Posterior vena cava (tissue), 2 donors: ENCODE measurements at regions of chr4 and their contacts with region 1.

Region 1: GRCh38 chr4:82268050-82268825 is 105.6 kb downstream of the HNRNPD start:
- DNase-seq: no peak

Region 2: DNA sequence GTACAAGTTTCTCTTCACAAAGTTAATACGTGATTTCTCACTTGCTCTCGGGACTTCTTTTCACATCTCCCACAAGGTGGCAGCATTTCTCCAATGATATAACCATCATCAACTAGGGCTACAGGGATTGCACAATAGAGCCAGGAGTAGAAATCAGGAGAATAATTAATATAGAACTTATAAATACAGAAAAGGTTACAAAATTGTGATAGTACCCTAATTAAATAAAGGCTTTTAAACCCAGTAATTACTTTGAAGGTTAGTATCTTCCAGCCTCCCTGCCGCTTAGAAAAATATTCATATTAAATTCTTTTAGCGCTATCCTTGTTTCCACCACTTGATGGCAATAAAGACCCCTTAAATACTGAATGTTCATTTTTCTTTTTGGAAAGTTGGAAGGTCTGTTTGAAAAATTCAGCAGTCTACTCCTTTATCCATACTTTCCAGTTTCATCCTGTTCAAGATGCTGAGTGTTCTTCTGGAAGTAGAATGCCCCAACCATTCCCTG is 862.3 kb before region 1 on chr4:
- intact Hi-C with region 1: loop called in 1 of 2 experiments (anchors 10 kb)
- DNase-seq: no peak

Region 3: DNA sequence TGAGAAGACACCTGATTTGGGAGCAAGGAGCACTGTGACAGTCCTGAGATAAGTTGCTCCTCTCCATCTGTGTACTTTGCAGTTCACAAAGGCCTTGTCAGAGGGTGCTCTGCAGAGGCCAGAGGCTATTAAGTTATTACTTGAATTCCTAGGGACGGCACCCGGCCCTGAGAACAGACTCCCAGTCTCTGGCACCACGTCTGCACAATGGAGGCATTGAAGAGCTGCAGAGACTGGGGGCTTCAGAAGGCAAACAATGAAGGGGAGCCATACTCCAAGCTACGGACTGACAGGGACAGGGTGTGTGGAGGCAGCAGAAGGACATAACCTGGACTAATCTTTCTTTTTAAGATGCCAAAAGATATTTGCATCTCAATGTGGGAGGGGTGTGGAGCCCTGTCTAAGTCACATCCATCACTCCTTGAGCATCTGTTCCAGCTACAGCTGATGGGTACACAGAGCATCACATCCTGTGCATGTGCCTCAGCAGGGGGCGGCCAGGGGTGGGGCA is 808.0 kb before region 1 on chr4:
- intact Hi-C with region 1: loop called in 1 of 2 experiments (anchors 5 kb)
- DNase-seq: no peak

Region 4: DNA sequence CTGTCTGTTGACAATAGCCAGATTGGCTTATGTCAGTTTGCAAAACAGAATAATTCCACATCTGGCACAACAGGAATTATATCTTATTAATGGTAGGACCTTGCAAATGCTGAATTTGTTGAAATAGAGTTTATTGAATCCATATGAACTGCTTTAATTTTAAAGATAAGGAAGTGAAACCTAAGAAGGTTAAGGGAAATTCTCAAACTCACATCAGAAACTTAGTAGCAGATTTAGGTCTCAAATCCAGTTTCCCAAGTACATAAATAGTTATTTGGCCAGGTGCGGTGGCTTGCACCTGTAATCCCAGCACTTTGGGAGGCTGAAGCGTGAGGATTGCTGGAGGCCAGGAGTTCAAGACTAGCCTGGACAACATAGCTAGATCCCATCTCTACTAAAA is 11.5 kb before region 1 on chr4:
- intact Hi-C with region 1: no loop called
- DNase-seq: no peak